ENCODE measurements at regions of chr6 and their contacts with region 1.

Region 1: DNA sequence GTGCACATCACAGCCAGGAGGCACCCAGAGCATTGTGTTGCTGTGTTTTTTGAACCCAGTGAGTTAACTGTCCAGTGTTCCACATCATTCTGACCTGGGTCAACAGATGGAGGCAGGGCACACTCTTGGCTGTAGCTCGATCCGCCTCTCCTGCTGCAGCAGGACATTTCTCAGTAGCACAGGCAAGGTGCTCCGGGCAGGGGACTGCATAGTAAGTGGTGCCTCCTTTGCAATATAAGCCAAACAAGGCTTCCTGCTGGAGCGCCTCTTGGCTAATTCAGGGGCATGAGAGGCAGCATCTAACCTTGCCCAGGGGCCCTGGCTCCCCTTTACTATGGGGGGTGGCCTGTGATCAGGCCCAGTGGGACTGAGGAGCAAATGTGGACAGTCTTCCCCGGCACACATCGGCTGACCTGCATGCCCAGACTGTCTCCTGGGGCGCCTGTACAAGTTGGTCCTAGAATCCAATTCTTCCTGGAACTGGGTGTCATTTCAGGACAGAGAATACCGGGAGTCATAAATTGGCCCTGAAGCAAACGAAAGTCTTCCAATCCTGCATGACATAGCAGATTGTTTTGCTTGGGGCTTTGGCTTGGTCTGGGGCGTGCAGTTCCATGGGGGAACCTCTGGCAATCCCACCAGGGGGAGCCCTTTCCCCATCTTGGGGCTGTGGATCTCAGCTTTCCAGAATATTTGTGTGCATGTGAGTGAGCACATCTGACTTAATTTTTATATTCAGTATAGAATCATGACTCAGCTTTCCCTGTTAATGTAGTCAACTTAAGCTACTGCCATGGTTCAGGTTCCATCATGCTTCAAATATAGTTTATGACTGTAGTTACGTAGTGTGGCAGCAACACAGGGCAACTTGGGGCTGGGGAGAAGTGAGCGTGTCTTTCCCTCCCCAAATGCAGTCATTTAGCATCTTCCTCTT is 56.0 kb upstream of the DDR1 start:
- DNase-seq: no peak
- ATAC-seq: peak; percentile 94
- H3K4me3 ChIP-seq: no peak overlapping the region
- H3K27ac ChIP-seq: no peak overlapping the region
- H3K4me1 ChIP-seq: peaks cover 16% of the 10 kb centered on the region
- H3K27me3 ChIP-seq: no peaks in the 10 kb centered on the region
- CTCF ChIP-seq: peak; percentile 88 to 97 (median 90); a peak in 5 of 6 replicates
- EP300 ChIP-seq: no peak
- POLR2A ChIP-seq: no peak
- RAD21 ChIP-seq: peak; percentile 99

Region 2: GRCh38 chr6:30590994-30591393 is 237.3 kb before region 1 on chr6:
- CTCF ChIA-PET with region 1: no interaction called
- POLR2A ChIA-PET with region 1: no interaction called
- RAD21 ChIA-PET with region 1: no interaction called
- SMC1A ChIA-PET with region 1: no interaction called
- in situ Hi-C with region 1: no loop called
- intact Hi-C with region 1: no loop called
- DNase-seq: no peak
- ATAC-seq: no peak
- H3K4me3 ChIP-seq: no peak overlapping the region
- H3K27ac ChIP-seq: no peak overlapping the region
- H3K4me1 ChIP-seq: no peaks in the 10 kb centered on the region
- H3K27me3 ChIP-seq: no peaks in the 10 kb centered on the region
- CTCF ChIP-seq: no peak
- EP300 ChIP-seq: no peak
- POLR2A ChIP-seq: no peak
- RAD21 ChIP-seq: no peak

Region 3: GRCh38 chr6:30678964-30679726 is 149.1 kb before region 1 on chr6:
- CTCF ChIA-PET with region 1: interaction called, 12 read pairs
- POLR2A ChIA-PET with region 1: no interaction called
- RAD21 ChIA-PET with region 1: interaction called, 6 read pairs
- SMC1A ChIA-PET with region 1: interaction called, 3 read pairs
- in situ Hi-C with region 1: loop called (anchors 5 kb)
- intact Hi-C with region 1: loop called (anchors 5 kb)
- DNase-seq: no peak
- ATAC-seq: peak; percentile 79
- H3K4me3 ChIP-seq: peak overlapping the region; percentile 100
- H3K27ac ChIP-seq: peak overlapping the region; percentile 65
- H3K4me1 ChIP-seq: peaks cover 8% of the 10 kb centered on the region
- H3K27me3 ChIP-seq: no peaks in the 10 kb centered on the region
- CTCF ChIP-seq: peak; percentile 97 to 98 (median 98); a peak in 5 of 6 replicates
- EP300 ChIP-seq: no peak
- POLR2A ChIP-seq: 0 out of 2 replicates have a peak, but pooled peaks have one; percentile 29
- RAD21 ChIP-seq: peak; percentile 97

Region 4: DNA sequence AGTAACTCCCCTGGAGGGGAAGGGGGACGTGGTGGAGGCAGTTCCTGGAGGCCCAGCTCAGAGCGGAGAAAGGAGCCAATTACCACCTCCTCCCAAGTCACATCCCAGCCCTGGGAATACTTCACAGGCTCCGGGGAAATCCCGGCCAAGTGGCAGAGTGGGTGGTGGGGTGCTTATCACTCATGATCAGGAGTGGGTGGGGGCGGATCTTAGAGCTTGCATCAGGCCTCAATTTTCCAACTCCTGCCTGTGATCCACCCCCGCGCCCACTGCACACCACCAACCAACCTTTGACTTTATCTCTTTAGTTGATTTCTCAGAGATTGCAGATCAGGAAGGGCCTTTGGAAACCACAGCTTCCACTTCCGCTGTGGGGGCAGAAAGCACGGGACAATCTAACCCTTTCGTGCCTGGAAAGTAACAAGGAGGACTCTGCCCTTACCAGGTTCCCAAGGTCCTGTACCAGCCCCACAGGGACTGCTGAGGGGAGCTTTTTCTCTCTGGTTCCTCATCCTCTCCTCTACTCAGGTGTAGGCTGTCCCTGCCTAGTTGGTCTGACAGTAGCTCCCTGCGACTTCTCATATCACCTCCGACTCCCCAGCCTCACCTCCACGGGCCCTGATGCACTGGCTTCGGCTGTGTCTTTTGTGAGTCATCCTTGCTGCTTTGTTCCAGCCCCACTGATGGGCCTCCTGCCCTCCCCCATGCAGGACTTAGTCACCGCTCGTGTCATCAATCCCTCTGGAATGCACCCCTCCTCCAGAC is 59.0 kb before region 1 on chr6:
- CTCF ChIA-PET with region 1: interaction called, 36 read pairs
- POLR2A ChIA-PET with region 1: interaction called, 4 read pairs
- RAD21 ChIA-PET with region 1: interaction called, 19 read pairs
- SMC1A ChIA-PET with region 1: interaction called, 217 read pairs
- in situ Hi-C with region 1: no loop called
- intact Hi-C with region 1: no loop called
- DNase-seq: no peak
- ATAC-seq: peak; percentile 38
- H3K4me3 ChIP-seq: no peak overlapping the region
- H3K27ac ChIP-seq: no peak overlapping the region; the same call in 1 of the 2 replicates
- H3K4me1 ChIP-seq: peaks cover 33% of the 10 kb centered on the region
- H3K27me3 ChIP-seq: no peaks in the 10 kb centered on the region
- CTCF ChIP-seq: no peak
- EP300 ChIP-seq: peak in 1 of 2 experiments; percentile 56; a peak in 2 of 4 replicates
- POLR2A ChIP-seq: no peak
- RAD21 ChIP-seq: no peak

Region 5: GRCh38 chr6:30877419-30878371 is 49.4 kb after region 1 on chr6:
- CTCF ChIA-PET with region 1: interaction called, 90 read pairs
- POLR2A ChIA-PET with region 1: interaction called, 7 read pairs
- RAD21 ChIA-PET with region 1: interaction called, 144 read pairs
- SMC1A ChIA-PET with region 1: interaction called, 72 read pairs
- in situ Hi-C with region 1: loop called (anchors 5 kb)
- intact Hi-C with region 1: loop called (anchors 1 kb)
- DNase-seq: peak; percentile 59
- ATAC-seq: peak; percentile 91
- H3K4me3 ChIP-seq: peak overlapping the region; percentile 61
- H3K27ac ChIP-seq: peak overlapping the region; percentile 68
- H3K4me1 ChIP-seq: peaks cover 21% of the 10 kb centered on the region
- H3K27me3 ChIP-seq: no peaks in the 10 kb centered on the region
- CTCF ChIP-seq: peak; percentile 91 to 95 (median 93); a peak in 5 of 6 replicates
- EP300 ChIP-seq: no peak
- POLR2A ChIP-seq: 0 out of 2 replicates have a peak, but pooled peaks have one; percentile 28
- RAD21 ChIP-seq: peak; percentile 95

Region 6: GRCh38 chr6:30907758-30908591 is 79.7 kb after region 1 on chr6 and contains the start of gene GTF2H4:
- CTCF ChIA-PET with region 1: interaction called, 122 read pairs
- POLR2A ChIA-PET with region 1: interaction called, 19 read pairs
- RAD21 ChIA-PET with region 1: interaction called, 90 read pairs
- SMC1A ChIA-PET with region 1: interaction called, 141 read pairs
- in situ Hi-C with region 1: no loop called
- intact Hi-C with region 1: no loop called
- DNase-seq: peak; percentile 94
- ATAC-seq: peak; percentile 99
- H3K4me3 ChIP-seq: peak within 1 kb of the TSS; percentile 100
- H3K27ac ChIP-seq: peak within 1 kb of the TSS; percentile 77
- H3K4me1 ChIP-seq: peaks cover 16% of the 10 kb centered on the region
- H3K27me3 ChIP-seq: no peaks in the 10 kb centered on the region
- CTCF ChIP-seq: no peak
- EP300 ChIP-seq: no peak
- POLR2A ChIP-seq: peak; percentile 65
- RAD21 ChIP-seq: 0 out of 2 replicates have a peak, but pooled peaks have one; percentile 1
- polyA plus RNA-seq, gene GTF2H4: 1.1 to 2.2 TPM

Region 7: DNA sequence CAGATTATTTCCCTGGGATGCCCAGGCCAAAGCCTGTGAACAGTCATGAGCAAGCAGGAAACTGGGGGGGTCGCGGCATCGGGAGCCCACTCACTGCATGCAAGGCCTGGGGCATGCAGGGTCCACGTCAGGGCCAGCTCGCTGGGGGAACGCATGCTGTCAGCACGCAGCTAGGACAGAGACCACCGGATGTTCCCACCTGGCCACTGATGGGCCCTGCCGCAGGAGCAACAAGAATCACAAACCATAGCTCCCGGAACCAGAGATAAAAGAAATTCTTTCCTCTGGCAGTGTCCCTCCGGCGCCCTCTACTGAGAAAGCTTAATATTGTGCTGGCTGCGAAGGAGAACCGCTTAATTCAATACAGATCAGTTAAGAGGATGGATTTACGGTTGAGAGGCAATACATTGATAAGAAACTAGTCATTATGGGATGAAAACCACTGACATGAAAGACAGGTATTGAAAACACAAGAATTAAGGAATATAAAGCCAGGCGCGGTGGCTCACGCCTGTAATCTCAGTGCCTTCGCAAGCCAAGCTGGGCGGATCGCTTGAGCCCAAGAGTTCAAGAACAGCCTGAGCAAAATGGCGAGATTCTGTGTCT is 251.5 kb after region 1 on chr6:
- CTCF ChIA-PET with region 1: interaction called, 25 read pairs
- POLR2A ChIA-PET with region 1: no interaction called
- RAD21 ChIA-PET with region 1: interaction called, 5 read pairs
- SMC1A ChIA-PET with region 1: interaction called, 11 read pairs
- in situ Hi-C with region 1: loop called (anchors 5 kb)
- intact Hi-C with region 1: no loop called
- DNase-seq: no peak
- ATAC-seq: peak; percentile 87
- H3K4me3 ChIP-seq: no peak overlapping the region
- H3K27ac ChIP-seq: no peak overlapping the region
- H3K4me1 ChIP-seq: no peaks in the 10 kb centered on the region
- H3K27me3 ChIP-seq: no peaks in the 10 kb centered on the region
- CTCF ChIP-seq: peak; percentile 74 to 85 (median 79)
- EP300 ChIP-seq: no peak
- POLR2A ChIP-seq: no peak
- RAD21 ChIP-seq: peak; percentile 85

Region 8: GRCh38 chr6:31271641-31272357 is 443.5 kb after region 1 on chr6 and contains the start of gene HLA-C:
- CTCF ChIA-PET with region 1: no interaction called
- POLR2A ChIA-PET with region 1: no interaction called
- RAD21 ChIA-PET with region 1: no interaction called
- SMC1A ChIA-PET with region 1: no interaction called
- in situ Hi-C with region 1: no loop called
- intact Hi-C with region 1: no loop called
- DNase-seq: peak; percentile 95
- ATAC-seq: peak; percentile 88
- H3K4me3 ChIP-seq: peak within 1 kb of the TSS; percentile 83
- H3K27ac ChIP-seq: peak within 1 kb of the TSS; percentile 95
- H3K4me1 ChIP-seq: peaks cover 21% of the 10 kb centered on the region
- H3K27me3 ChIP-seq: no peaks in the 10 kb centered on the region
- CTCF ChIP-seq: peak in 1 of 3 experiments; percentile 10; a peak in 1 of 6 replicates
- EP300 ChIP-seq: no peak
- POLR2A ChIP-seq: peak; percentile 95
- RAD21 ChIP-seq: peak; percentile 30; the same call in 1 of the 2 replicates
- polyA plus RNA-seq, gene HLA-C: 121 to 379 TPM